Right ventricle myocardium inferior (tissue), 1 donor: ENCODE measurements at regions of chr7 and their contacts with region 1.

Region 1: GRCh38 chr7:137981670-137982069 is 20.2 kb downstream of the CREB3L2 start:
- DNase-seq: no peak
- ATAC-seq: no peak

Region 2: GRCh38 chr7:137853053-137853452 is 128.6 kb before region 1 on chr7:
- intact Hi-C with region 1: no loop called
- DNase-seq: no peak
- ATAC-seq: no peak

Region 3: DNA sequence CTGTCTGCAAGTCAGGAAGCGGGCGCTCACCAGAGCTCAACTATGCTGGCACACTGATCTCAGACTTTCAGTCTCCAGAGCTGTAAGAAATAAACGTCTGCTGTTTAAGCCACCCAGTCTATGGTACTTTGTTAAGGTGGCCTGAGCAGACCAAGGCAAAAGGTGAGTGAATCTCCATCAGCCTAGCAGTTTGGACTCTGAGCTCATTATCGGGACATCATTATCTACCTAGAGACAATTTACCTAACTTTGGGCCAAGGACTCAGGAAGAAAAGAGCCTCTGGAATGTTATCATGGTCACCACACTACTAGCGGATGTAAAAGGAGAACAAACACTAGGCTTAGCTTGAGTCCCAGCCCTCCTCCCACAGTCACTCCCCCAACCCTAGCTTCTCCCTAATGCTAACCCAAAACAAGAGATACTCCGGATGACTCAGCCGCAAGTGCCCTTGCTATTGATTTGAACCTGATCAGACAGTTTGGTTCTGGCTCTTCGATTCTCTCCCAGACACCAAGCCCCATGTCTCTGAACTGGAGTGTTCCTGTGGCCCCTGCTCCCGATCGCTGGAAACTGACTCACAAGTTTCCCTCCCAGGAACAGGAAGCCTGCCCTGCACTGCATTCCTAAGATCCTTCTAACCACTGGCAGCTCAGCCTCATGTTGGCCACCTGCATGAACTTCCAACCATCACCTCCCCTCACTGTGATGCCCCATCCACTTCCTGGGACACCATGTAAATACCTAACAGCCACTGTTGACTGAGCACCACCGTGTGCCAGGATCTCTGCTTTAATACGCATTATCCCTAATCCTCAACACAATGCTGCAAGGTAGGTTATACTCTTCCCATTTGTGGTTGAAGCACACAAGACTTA is 14.3 kb before region 1 on chr7:
- intact Hi-C with region 1: loop called (anchors 1 kb)
- DNase-seq: no peak
- ATAC-seq: no peak

Region 4: GRCh38 chr7:138138244-138138643 is 156.6 kb after region 1 on chr7:
- intact Hi-C with region 1: no loop called
- DNase-seq: no peak
- ATAC-seq: no peak